CD14-positive monocyte (primary cell): ENCODE measurements at regions of chr12 and their contacts with region 1.

Region 1: DNA sequence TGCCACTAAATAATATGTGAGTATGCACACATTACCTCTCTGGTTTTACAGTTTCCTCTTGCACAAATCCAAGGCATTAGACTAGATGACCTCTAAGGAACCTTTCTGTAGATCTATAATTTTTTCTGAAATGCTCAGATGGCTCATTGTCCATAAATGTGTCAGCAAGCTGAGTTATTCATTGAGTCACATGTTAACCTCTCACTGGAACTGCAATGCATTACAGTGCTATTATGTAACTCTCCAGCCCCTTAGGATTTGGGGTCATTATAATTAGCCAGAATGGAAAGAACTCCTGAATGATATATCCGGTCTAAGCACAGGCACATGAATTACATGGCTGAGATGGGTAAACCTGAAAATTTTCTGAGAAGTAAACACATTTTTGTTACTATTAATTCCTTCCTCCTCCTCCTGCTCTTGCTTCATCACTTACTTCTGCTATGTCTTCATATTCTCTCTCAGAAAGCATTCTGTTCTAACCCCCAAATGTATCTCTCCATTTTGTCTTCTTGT is 20.3 kb upstream of the DRAM1 start:
- DNase-seq: peak; percentile 62 to 88 (median 73)
- H3K4me3 ChIP-seq: no peak overlapping the region
- H3K4me3 Mint-ChIP-seq: no peak overlapping the region
- H3K27ac ChIP-seq: peak overlapping the region; percentile 49 to 74
- H3K27ac Mint-ChIP-seq: peak overlapping the region in 1 of 7 donors; percentile 85
- H3K4me1 ChIP-seq: peaks cover 43 to 58% of the 10 kb centered on the region in 2 donors
- H3K4me1 Mint-ChIP-seq: peaks cover 41% of the 10 kb centered on the region
- H3K27me3 ChIP-seq: no peaks in the 10 kb centered on the region
- H3K27me3 Mint-ChIP-seq: peaks cover 0 to 2% (median 1%) of the 10 kb centered on the region in 3 donors
- CTCF ChIP-seq: no peak

Region 2: DNA sequence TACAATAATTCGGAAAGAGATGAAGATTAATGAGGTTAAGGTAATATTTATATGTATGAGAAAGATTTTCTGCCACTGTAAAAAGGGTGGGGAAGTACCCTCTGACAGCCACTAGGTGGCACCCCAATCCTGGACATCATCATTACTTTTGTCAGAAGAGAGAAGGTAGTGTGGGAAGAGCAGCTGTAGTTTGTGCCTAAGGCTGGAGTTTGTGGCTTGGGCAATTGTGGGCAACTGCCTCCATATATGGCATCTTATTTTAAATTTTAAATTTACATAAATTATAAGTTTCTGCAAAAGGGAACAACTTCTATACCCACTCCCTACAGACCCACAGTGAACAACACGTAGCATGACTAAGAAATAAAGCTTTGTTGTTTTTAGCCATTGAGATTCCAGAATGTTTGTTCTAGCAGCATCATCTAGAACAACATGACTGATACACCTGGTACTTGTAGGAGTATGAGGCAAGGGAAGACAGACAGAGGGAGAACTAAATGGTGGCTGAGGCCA is 83.4 kb before region 1 on chr12:
- intact Hi-C with region 1: no loop called
- DNase-seq: peak; percentile 71 to 79 (median 77)
- H3K4me3 ChIP-seq: no peak overlapping the region
- H3K4me3 Mint-ChIP-seq: no peak overlapping the region
- H3K27ac ChIP-seq: no peak overlapping the region
- H3K27ac Mint-ChIP-seq: peak overlapping the region in 6 of 7 donors; percentile 28 to 90 (median 79)
- H3K4me1 ChIP-seq: peaks cover 51 to 59% of the 10 kb centered on the region in 2 donors
- H3K4me1 Mint-ChIP-seq: peaks cover 59% of the 10 kb centered on the region
- H3K27me3 ChIP-seq: no peaks in the 10 kb centered on the region
- H3K27me3 Mint-ChIP-seq: no peaks in the 10 kb centered on the region
- CTCF ChIP-seq: peak; percentile 98

Region 3: GRCh38 chr12:101909646-101910045 is 52.5 kb after region 1 on chr12:
- intact Hi-C with region 1: loop called in 1 of 2 experiments (anchors 10 kb)
- DNase-seq: peak; percentile 33 to 82 (median 62)
- H3K4me3 ChIP-seq: peak overlapping the region; percentile 19 to 67 (median 42)
- H3K4me3 Mint-ChIP-seq: peak overlapping the region; percentile 65 to 85
- H3K27ac ChIP-seq: peak overlapping the region in 1 of 2 donors; percentile 74
- H3K27ac Mint-ChIP-seq: peak overlapping the region; percentile 63 to 88 (median 82)
- H3K4me1 ChIP-seq: peaks cover 13 to 31% of the 10 kb centered on the region in 2 donors
- H3K4me1 Mint-ChIP-seq: peaks cover 30% of the 10 kb centered on the region
- H3K27me3 ChIP-seq: no peaks in the 10 kb centered on the region
- H3K27me3 Mint-ChIP-seq: no peaks in the 10 kb centered on the region
- CTCF ChIP-seq: no peak